K562 (cell line): ENCODE measurements at regions of chr3 and their contacts with region 1.

Region 1: DNA sequence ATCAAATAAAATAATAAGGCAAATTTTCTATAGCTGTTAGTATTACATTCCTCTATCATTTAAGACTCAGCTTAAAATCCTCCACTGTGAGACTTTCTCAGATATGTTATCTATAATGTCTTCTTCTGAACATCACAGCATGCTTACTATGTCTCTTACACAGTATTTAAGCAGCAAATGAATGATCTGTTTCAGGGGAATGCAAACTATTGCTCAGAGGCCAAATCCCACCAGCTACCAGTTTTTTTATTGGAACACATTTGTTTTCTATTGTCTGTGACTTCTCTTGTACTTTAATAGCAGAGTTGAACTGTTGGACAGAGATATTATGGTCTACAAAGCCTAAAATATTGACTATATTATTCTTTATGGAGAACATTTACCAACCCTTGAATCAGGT is 59.6 kb downstream of the C3orf38 start:
- DNase-seq: no peak
- ATAC-seq: no peak
- H3K4me3 ChIP-seq: no peak overlapping the region
- H3K27ac ChIP-seq: no peak overlapping the region
- H3K4me1 ChIP-seq: no peaks in the 10 kb centered on the region
- H3K27me3 ChIP-seq: no peaks in the 10 kb centered on the region
- CTCF ChIP-seq: no peak
- EP300 ChIP-seq: no peak
- POLR2A ChIP-seq: no peak
- RAD21 ChIP-seq: no peak

Region 2: GRCh38 chr3:88195951-88196434 is 13.4 kb before region 1 on chr3:
- CTCF ChIA-PET with region 1: no interaction called
- POLR2A ChIA-PET with region 1: no interaction called
- in situ Hi-C with region 1: no loop called
- intact Hi-C with region 1: no loop called
- DNase-seq: peak in 3 of 4 experiments; percentile 5 to 81 (median 11)
- ATAC-seq: peak; percentile 96
- H3K4me3 ChIP-seq: no peak overlapping the region
- H3K27ac ChIP-seq: peak overlapping the region; percentile 88
- H3K4me1 ChIP-seq: no peaks in the 10 kb centered on the region; a peak in 2 of 5 replicates
- H3K27me3 ChIP-seq: no peaks in the 10 kb centered on the region
- CTCF ChIP-seq: no peak
- EP300 ChIP-seq: no peak
- POLR2A ChIP-seq: no peak
- RAD21 ChIP-seq: no peak

Region 3: GRCh38 chr3:88231207-88231606 is 21.9 kb after region 1 on chr3:
- CTCF ChIA-PET with region 1: no interaction called
- POLR2A ChIA-PET with region 1: no interaction called
- in situ Hi-C with region 1: no loop called
- intact Hi-C with region 1: no loop called
- DNase-seq: no peak
- ATAC-seq: no peak
- H3K4me3 ChIP-seq: no peak overlapping the region
- H3K27ac ChIP-seq: no peak overlapping the region
- H3K4me1 ChIP-seq: no peaks in the 10 kb centered on the region
- H3K27me3 ChIP-seq: no peaks in the 10 kb centered on the region
- CTCF ChIP-seq: no peak
- EP300 ChIP-seq: no peak
- POLR2A ChIP-seq: no peak
- RAD21 ChIP-seq: no peak

Region 4: DNA sequence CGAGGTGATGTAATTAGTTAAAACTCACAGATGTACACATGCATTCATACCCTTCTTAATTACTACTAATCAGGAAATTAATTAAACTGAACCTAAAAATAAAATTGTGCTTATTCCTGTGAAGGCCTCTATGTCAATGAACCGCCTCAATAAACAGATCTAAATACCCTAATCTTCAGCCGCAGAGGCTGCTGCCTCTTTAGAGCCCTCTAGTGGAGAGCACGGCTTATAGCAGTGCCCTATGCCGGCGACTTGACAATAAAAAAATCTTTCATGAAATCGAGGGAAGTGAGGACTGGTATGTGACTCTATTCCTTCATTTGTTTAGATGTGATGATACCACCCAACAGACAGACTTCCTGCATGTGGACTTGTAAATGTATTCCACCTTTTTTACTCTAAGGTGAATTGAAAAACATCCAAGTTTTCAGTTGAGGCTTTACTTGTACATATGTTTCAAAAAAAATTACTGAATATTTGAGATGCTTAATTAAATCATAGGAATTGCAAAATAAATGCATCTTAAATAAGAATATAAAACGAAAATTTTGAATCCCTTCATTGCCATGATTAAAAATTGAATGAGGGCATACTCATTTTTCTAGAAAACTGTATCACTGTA is 889.7 kb after region 1 on chr3:
- CTCF ChIA-PET with region 1: no interaction called
- POLR2A ChIA-PET with region 1: no interaction called
- in situ Hi-C with region 1: no loop called
- intact Hi-C with region 1: loop called (anchors 5 kb)
- DNase-seq: peak; percentile 15 to 34 (median 22)
- ATAC-seq: peak; percentile 57; the same call in 2 of the 3 replicates
- H3K4me3 ChIP-seq: no peak overlapping the region
- H3K27ac ChIP-seq: no peak overlapping the region
- H3K4me1 ChIP-seq: no peaks in the 10 kb centered on the region
- H3K27me3 ChIP-seq: no peaks in the 10 kb centered on the region
- CTCF ChIP-seq: peak; percentile 42 to 67 (median 54); a peak in 5 of 6 replicates
- EP300 ChIP-seq: no peak
- POLR2A ChIP-seq: no peak
- RAD21 ChIP-seq: peak in 1 of 2 experiments; percentile 48; a peak in 3 of 4 replicates